CD8-positive, alpha-beta T cell (primary cell): ENCODE measurements at regions of chr2 and their contacts with region 1.

Region 1: DNA sequence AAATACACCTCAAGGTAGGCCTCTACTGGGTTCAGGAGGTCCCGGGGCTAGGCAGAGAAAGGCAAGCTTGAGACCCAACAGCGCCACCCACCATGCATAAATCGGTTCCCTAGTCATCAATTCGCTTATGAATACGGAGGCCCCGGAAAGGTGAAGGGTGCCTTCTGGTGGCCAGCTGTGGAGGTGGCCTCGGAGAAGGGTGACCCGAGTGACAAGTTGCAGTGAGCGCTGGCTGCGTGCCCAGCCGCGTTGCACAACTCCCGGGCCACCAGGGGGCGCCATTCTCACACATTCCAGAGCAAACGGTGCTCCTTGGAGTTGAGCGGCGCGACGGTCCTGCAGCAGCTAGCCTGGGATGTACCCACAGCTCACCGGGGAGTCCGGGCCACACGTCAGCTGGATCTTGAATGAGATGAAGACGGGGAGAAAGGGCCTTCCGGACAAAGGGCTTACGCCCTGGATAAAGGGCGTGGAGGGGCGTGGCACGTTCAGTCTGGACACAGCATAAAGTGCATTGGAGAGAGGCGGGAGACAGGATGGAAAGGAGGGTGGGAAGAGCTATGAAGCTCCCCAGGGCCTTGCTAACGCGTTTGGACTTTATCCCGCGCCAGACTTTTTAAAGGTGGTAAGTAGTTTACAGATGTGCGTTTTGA is 20.4 kb downstream of the TMSB10 start:
- DNase-seq: peak; percentile 96 to 100 (median 98)
- ATAC-seq: peak; percentile 80
- H3K4me3 ChIP-seq: peak overlapping the region; percentile 74 to 80
- H3K4me3 Mint-ChIP-seq: peak overlapping the region; percentile 94
- H3K27ac ChIP-seq: peak overlapping the region; percentile 49 to 54
- H3K27ac Mint-ChIP-seq: peak overlapping the region; percentile 92
- H3K4me1 ChIP-seq: peaks cover 26% of the 10 kb centered on the region
- H3K4me1 Mint-ChIP-seq: peaks cover 41% of the 10 kb centered on the region
- H3K27me3 ChIP-seq: no peaks in the 10 kb centered on the region
- H3K27me3 Mint-ChIP-seq: no peaks in the 10 kb centered on the region
- CTCF ChIP-seq: peak; percentile 99

Region 2: DNA sequence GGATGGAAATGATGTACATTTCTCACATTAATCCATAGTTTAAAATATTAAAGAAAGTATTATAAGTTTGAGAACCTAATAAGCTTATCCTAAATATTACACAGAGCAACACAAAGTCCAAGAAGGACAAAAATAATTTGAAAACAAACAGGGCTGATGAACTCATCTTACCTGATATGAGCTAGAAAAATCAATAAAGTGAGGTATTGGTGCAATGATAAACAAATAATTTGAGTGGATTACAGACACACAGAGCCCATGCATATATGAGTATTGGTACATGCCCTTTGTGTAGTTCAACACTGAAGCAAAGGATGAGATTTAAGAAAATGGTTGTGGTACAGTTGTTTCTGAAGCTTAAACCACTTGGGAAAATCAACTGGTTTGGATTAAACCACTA is 1605.8 kb before region 1 on chr2:
- CTCF ChIA-PET with region 1: no interaction called
- POLR2A ChIA-PET with region 1: no interaction called
- intact Hi-C with region 1: no loop called
- DNase-seq: no peak
- ATAC-seq: no peak
- H3K4me3 ChIP-seq: no peak overlapping the region
- H3K4me3 Mint-ChIP-seq: no peak overlapping the region
- H3K27ac ChIP-seq: no peak overlapping the region
- H3K27ac Mint-ChIP-seq: no peak overlapping the region
- H3K4me1 ChIP-seq: no peaks in the 10 kb centered on the region
- H3K4me1 Mint-ChIP-seq: no peaks in the 10 kb centered on the region
- H3K27me3 ChIP-seq: no peaks in the 10 kb centered on the region
- H3K27me3 Mint-ChIP-seq: no peaks in the 10 kb centered on the region
- CTCF ChIP-seq: no peak

Region 3: GRCh38 chr2:84516234-84516986 is 409.4 kb before region 1 on chr2 and contains the start of gene DNAH6:
- CTCF ChIA-PET with region 1: interaction called, 10 read pairs
- POLR2A ChIA-PET with region 1: interaction called, 4 read pairs
- intact Hi-C with region 1: no loop called
- DNase-seq: peak; percentile 71 to 95 (median 85)
- ATAC-seq: peak; percentile 98
- H3K4me3 ChIP-seq: peak within 1 kb of the TSS; percentile 45 to 49
- H3K4me3 Mint-ChIP-seq: peak within 1 kb of the TSS; percentile 89
- H3K27ac ChIP-seq: peak within 1 kb of the TSS; percentile 56 to 74
- H3K27ac Mint-ChIP-seq: peak within 1 kb of the TSS; percentile 85
- H3K4me1 ChIP-seq: peaks cover 9% of the 10 kb centered on the region
- H3K4me1 Mint-ChIP-seq: peaks cover 18% of the 10 kb centered on the region
- H3K27me3 ChIP-seq: no peaks in the 10 kb centered on the region
- H3K27me3 Mint-ChIP-seq: no peaks in the 10 kb centered on the region
- CTCF ChIP-seq: no peak
- total RNA-seq, gene DNAH6: 0.30 to 0.61 TPM

Region 4: GRCh38 chr2:84741296-84741765 is 184.5 kb before region 1 on chr2:
- CTCF ChIA-PET with region 1: interaction called, 13 read pairs
- POLR2A ChIA-PET with region 1: no interaction called
- intact Hi-C with region 1: no loop called
- DNase-seq: peak; percentile 13 to 80 (median 41)
- ATAC-seq: peak; percentile 99
- H3K4me3 ChIP-seq: no peak overlapping the region
- H3K4me3 Mint-ChIP-seq: no peak overlapping the region
- H3K27ac ChIP-seq: peak overlapping the region in 1 of 2 experiments; percentile 67
- H3K27ac Mint-ChIP-seq: peak overlapping the region; percentile 73
- H3K4me1 ChIP-seq: peaks cover 28% of the 10 kb centered on the region
- H3K4me1 Mint-ChIP-seq: peaks cover 37% of the 10 kb centered on the region
- H3K27me3 ChIP-seq: no peaks in the 10 kb centered on the region
- H3K27me3 Mint-ChIP-seq: no peaks in the 10 kb centered on the region
- CTCF ChIP-seq: peak; percentile 33

Region 5: GRCh38 chr2:84799772-84800171 is 126.1 kb before region 1 on chr2:
- CTCF ChIA-PET with region 1: no interaction called
- POLR2A ChIA-PET with region 1: no interaction called
- intact Hi-C with region 1: no loop called
- DNase-seq: no peak
- ATAC-seq: no peak
- H3K4me3 ChIP-seq: no peak overlapping the region
- H3K4me3 Mint-ChIP-seq: peak overlapping the region; percentile 42
- H3K27ac ChIP-seq: no peak overlapping the region
- H3K27ac Mint-ChIP-seq: no peak overlapping the region
- H3K4me1 ChIP-seq: peaks cover 4% of the 10 kb centered on the region
- H3K4me1 Mint-ChIP-seq: peaks cover 24% of the 10 kb centered on the region
- H3K27me3 ChIP-seq: no peaks in the 10 kb centered on the region
- H3K27me3 Mint-ChIP-seq: no peaks in the 10 kb centered on the region
- CTCF ChIP-seq: no peak

Region 6: GRCh38 chr2:84856787-84857186 is 69.1 kb before region 1 on chr2:
- CTCF ChIA-PET with region 1: interaction called, 27 read pairs
- POLR2A ChIA-PET with region 1: interaction called, 11 read pairs
- intact Hi-C with region 1: no loop called
- DNase-seq: peak in 4 of 9 experiments; percentile 44 to 66 (median 51)
- ATAC-seq: peak; percentile 47
- H3K4me3 ChIP-seq: peak overlapping the region in 1 of 2 experiments; percentile 21
- H3K4me3 Mint-ChIP-seq: peak overlapping the region; percentile 75
- H3K27ac ChIP-seq: peak overlapping the region; percentile 53 to 60
- H3K27ac Mint-ChIP-seq: peak overlapping the region; percentile 98
- H3K4me1 ChIP-seq: peaks cover 96% of the 10 kb centered on the region
- H3K4me1 Mint-ChIP-seq: peaks cover 94% of the 10 kb centered on the region
- H3K27me3 ChIP-seq: no peaks in the 10 kb centered on the region
- H3K27me3 Mint-ChIP-seq: no peaks in the 10 kb centered on the region
- CTCF ChIP-seq: no peak

Region 7: DNA sequence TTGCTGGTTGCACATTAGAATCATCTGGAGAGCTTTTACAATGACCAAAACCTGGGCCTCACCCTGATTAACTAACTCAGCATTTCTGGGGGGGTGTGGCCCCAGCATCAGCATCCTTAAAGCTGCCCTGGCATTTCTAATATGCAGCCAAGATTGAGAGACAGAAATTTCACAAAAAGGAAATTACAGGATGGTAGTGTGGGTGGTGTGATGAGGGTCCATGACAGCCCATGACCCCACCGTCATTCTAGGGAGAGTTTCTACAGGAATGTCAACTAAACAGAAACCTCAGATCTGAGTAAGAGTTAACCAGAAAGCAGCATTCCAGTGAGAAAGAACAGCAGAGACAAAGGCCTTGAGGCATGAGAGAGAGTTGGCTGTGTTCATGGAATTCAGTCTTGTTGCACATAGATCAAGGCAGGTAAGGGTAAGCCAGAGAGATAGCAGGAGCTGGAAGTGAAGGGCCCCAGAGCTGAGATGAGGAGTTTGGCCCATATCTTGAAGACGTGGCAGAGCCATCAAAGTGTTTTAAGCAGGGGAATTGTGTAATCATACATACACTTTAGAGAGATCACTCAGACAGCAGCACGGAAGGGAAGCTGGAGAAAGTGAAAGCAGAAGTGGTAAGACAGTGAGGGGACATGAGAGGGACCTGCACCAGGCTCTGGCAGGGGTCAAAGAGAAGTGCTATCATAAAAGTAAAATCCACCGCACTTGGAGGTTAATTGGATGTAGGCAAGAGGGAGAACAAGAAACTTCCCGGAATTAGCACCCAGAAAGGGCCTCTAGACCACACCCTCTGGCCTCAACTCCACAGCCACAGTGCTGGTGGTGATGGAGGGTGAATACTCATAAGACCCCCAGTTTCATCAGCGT is 37.2 kb before region 1 on chr2:
- CTCF ChIA-PET with region 1: interaction called, 278 read pairs
- POLR2A ChIA-PET with region 1: interaction called, 20 read pairs
- intact Hi-C with region 1: loop called in 1 of 2 experiments (anchors 2 kb)
- DNase-seq: peak in 8 of 9 experiments; percentile 19 to 84 (median 62)
- ATAC-seq: peak; percentile 96
- H3K4me3 ChIP-seq: peak overlapping the region; percentile 28 to 39
- H3K4me3 Mint-ChIP-seq: peak overlapping the region; percentile 76
- H3K27ac ChIP-seq: peak overlapping the region; percentile 57 to 87
- H3K27ac Mint-ChIP-seq: peak overlapping the region; percentile 97
- H3K4me1 ChIP-seq: peaks cover 26% of the 10 kb centered on the region
- H3K4me1 Mint-ChIP-seq: peaks cover 61% of the 10 kb centered on the region
- H3K27me3 ChIP-seq: no peaks in the 10 kb centered on the region
- H3K27me3 Mint-ChIP-seq: no peaks in the 10 kb centered on the region
- CTCF ChIP-seq: no peak

Region 8: GRCh38 chr2:84939426-84940087 is 13.7 kb after region 1 on chr2:
- CTCF ChIA-PET with region 1: interaction called, 31 read pairs
- POLR2A ChIA-PET with region 1: interaction called, 19 read pairs
- intact Hi-C with region 1: no loop called
- DNase-seq: peak; percentile 33 to 93 (median 68)
- ATAC-seq: peak; percentile 85
- H3K4me3 ChIP-seq: peak overlapping the region; percentile 29
- H3K4me3 Mint-ChIP-seq: peak overlapping the region; percentile 73
- H3K27ac ChIP-seq: peak overlapping the region; percentile 43 to 86
- H3K27ac Mint-ChIP-seq: peak overlapping the region; percentile 94
- H3K4me1 ChIP-seq: peaks cover 23% of the 10 kb centered on the region
- H3K4me1 Mint-ChIP-seq: peaks cover 27% of the 10 kb centered on the region
- H3K27me3 ChIP-seq: no peaks in the 10 kb centered on the region
- H3K27me3 Mint-ChIP-seq: no peaks in the 10 kb centered on the region
- CTCF ChIP-seq: no peak

Region 9: DNA sequence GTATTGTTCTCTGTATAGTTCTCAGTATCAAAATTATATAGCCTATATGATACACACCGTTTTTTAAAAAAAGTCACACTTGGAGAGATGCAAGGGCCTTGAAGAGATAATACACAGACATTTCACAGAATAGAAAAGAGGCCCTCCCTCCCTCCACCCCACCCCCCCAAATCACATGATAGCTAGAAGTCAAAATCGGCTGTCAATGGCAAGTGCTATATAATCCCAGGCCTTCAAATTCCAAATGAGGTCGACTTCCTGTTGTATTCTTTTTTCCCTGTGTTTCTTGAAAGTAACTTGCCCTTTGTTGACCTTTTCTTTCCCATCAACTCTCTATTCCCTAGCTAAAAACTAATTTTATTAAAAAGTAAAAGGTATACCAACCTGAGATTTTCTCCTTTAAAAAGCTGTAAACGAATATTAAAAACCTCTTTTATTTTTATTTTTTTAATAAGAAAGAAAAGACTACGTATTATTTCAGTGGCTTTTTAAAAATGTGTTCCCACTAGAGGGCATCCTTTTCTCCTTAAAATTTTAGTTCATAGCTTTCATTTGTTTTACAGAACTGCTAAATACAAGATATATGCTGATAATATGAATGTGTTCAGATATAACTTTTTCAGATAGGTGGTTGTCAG is 91.7 kb after region 1 on chr2:
- CTCF ChIA-PET with region 1: interaction called, 4 read pairs
- POLR2A ChIA-PET with region 1: no interaction called
- intact Hi-C with region 1: loop called (anchors 1 kb)
- DNase-seq: peak in 2 of 9 experiments; percentile 23 to 39
- ATAC-seq: no peak
- H3K4me3 ChIP-seq: no peak overlapping the region
- H3K4me3 Mint-ChIP-seq: no peak overlapping the region
- H3K27ac ChIP-seq: no peak overlapping the region
- H3K27ac Mint-ChIP-seq: peak overlapping the region; percentile 64
- H3K4me1 ChIP-seq: peaks cover 15% of the 10 kb centered on the region
- H3K4me1 Mint-ChIP-seq: peaks cover 69% of the 10 kb centered on the region
- H3K27me3 ChIP-seq: no peaks in the 10 kb centered on the region
- H3K27me3 Mint-ChIP-seq: no peaks in the 10 kb centered on the region
- CTCF ChIP-seq: peak; percentile 56